Activated CD4-positive, alpha-beta T cell treated with anti-CD3 and anti-CD28 coated beads, Interleukin-2, amount 10 ng/mL, durations not matched to agents 24 days and 14 days (primary cell): ENCODE measurements at regions of chr4 and their contacts with region 1.

Region 1: GRCh38 chr4:112327965-112328733 is 31.0 kb downstream of the ALPK1 start:
- DNase-seq: peak; percentile 64
- H3K4me3 Mint-ChIP-seq: no peak overlapping the region
- H3K27ac Mint-ChIP-seq: no peak overlapping the region
- H3K4me1 Mint-ChIP-seq: no peaks in the 10 kb centered on the region
- H3K27me3 Mint-ChIP-seq: no peaks in the 10 kb centered on the region

Region 2: GRCh38 chr4:112604589-112604988 is 276.4 kb after region 1 on chr4:
- intact Hi-C with region 1: loop called (anchors 1 kb)
- DNase-seq: peak; percentile 84
- H3K4me3 Mint-ChIP-seq: no peak overlapping the region
- H3K27ac Mint-ChIP-seq: no peak overlapping the region
- H3K4me1 Mint-ChIP-seq: no peaks in the 10 kb centered on the region
- H3K27me3 Mint-ChIP-seq: no peaks in the 10 kb centered on the region

Region 3: GRCh38 chr4:112765317-112765975 is 437.3 kb after region 1 on chr4:
- intact Hi-C with region 1: loop called (anchors 1 kb)
- DNase-seq: no peak
- H3K4me3 Mint-ChIP-seq: no peak overlapping the region
- H3K27ac Mint-ChIP-seq: no peak overlapping the region
- H3K4me1 Mint-ChIP-seq: peaks cover 2% of the 10 kb centered on the region
- H3K27me3 Mint-ChIP-seq: no peaks in the 10 kb centered on the region

Region 4: DNA sequence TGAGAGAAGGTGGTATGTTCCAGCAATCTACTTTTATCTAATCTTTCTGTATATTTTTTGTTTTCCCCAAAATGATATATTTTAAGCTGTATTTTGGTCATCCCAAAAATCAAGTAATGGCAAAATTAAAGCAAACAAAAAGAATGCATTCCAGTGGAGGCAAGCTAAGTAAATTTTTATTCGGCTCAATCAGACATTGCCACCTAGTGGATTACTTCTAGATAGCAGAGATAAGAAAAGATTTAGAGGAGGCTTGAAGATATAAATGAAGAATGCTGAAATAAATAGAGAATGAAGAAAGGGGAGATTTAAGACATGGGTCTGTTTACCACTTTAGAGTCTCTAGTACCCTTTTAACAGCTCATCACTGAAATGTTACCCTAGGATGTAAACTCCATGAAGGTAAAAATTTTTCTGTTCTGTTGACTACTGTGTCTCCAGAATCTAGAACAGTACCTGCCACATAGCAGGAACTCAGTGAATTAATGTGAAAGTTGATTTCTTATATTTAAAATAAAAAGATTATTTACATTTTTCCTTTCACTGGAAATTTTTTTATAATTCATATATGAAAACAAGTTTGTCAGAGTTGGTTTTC is 610.4 kb after region 1 on chr4:
- intact Hi-C with region 1: loop called (anchors 10 kb)
- DNase-seq: no peak
- H3K4me3 Mint-ChIP-seq: no peak overlapping the region
- H3K27ac Mint-ChIP-seq: no peak overlapping the region
- H3K4me1 Mint-ChIP-seq: no peaks in the 10 kb centered on the region
- H3K27me3 Mint-ChIP-seq: peaks cover 8% of the 10 kb centered on the region